Activated naive CD4-positive, alpha-beta T cell treated with anti-CD3 and anti-CD28 coated beads for 36 hours (primary cell): ENCODE measurements at regions of chr15 and their contacts with region 1.

Region 1: GRCh38 chr15:56491110-56491722 is 26.3 kb upstream of the MNS1 start:
- DNase-seq: peak; percentile 81
- H3K4me3 Mint-ChIP-seq: no peak overlapping the region
- H3K27ac Mint-ChIP-seq: no peak overlapping the region
- H3K4me1 Mint-ChIP-seq: no peaks in the 10 kb centered on the region
- H3K27me3 Mint-ChIP-seq: peaks cover 3% of the 10 kb centered on the region

Region 2: DNA sequence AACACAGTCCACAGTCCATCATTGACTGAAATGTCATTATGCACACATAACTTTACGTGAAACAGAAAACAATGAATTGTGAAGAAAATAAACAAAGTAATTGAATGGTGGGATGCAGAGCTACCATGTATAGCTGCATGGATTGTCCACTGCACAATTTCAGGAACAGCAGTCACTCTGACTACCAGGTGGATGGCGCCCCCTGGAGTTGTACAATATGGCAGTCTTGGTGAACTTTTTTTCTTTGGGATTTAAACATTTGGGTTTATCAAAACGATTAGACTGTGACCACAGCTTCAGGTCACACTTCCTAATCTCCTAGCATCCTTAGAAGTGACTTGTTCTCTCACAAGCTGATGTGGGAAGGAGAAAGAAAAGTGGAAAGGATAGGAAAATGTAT is 378.4 kb after region 1 on chr15:
- CTCF ChIA-PET with region 1: interaction called, 95 read pairs
- intact Hi-C with region 1: loop called (anchors 1 kb)
- DNase-seq: peak; percentile 73
- H3K4me3 Mint-ChIP-seq: no peak overlapping the region
- H3K27ac Mint-ChIP-seq: no peak overlapping the region
- H3K4me1 Mint-ChIP-seq: no peaks in the 10 kb centered on the region
- H3K27me3 Mint-ChIP-seq: no peaks in the 10 kb centered on the region

Region 3: DNA sequence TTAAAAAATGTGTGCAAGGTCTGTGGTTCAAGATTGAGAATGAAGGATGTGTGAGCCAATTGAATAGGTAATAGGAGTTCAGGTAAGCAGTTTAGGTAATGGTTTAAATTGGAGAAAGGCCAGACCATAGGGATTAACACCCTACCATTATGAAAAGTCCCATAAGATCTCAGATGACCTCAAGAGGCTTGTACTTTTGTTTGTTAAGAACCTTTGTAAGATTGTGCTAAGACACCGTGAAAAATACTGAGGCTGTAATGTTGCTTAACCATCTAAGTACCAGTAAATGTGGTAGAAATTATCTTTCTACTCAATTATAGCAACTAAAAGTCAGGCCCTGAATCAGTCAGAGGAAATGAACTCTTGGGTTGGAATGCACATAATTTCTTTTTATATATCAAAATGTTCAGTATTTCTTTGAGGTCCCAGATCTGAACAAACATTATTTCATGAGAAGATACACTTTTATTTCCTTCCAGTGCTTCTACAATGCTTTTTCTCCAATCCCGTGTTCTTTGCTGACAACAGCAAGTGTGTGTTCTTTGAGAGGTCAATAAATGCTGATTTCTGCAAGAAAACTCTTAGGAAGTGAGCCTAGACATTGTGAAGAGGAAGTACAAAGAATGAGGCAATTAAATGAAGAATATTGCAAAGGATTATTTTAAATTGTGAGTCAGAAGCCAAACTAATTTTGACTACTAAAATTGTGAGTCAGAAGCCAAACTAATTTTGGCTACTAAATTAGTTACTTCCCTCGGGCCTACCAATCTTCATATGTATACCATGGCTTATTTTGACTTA is 493.7 kb after region 1 on chr15:
- CTCF ChIA-PET with region 1: no interaction called
- intact Hi-C with region 1: loop called (anchors 10 kb)
- DNase-seq: no peak
- H3K4me3 Mint-ChIP-seq: no peak overlapping the region
- H3K27ac Mint-ChIP-seq: no peak overlapping the region
- H3K4me1 Mint-ChIP-seq: peaks cover 59% of the 10 kb centered on the region
- H3K27me3 Mint-ChIP-seq: no peaks in the 10 kb centered on the region